ENCODE measurements at regions of chrX and their contacts with region 1.

Region 1: GRCh38 chrX:150898343-150899190 is at the start of gene CD99L2:
- DNase-seq: peak; percentile 84
- H3K4me3 Mint-ChIP-seq: peak within 1 kb of the TSS; percentile 87
- H3K27ac Mint-ChIP-seq: peak within 1 kb of the TSS; percentile 61
- H3K4me1 Mint-ChIP-seq: peaks cover 13% of the 10 kb centered on the region
- H3K27me3 Mint-ChIP-seq: peaks cover 4% of the 10 kb centered on the region
- total RNA-seq, gene CD99L2: 9.0 and 10.1 TPM in 2 replicates

Region 2: DNA sequence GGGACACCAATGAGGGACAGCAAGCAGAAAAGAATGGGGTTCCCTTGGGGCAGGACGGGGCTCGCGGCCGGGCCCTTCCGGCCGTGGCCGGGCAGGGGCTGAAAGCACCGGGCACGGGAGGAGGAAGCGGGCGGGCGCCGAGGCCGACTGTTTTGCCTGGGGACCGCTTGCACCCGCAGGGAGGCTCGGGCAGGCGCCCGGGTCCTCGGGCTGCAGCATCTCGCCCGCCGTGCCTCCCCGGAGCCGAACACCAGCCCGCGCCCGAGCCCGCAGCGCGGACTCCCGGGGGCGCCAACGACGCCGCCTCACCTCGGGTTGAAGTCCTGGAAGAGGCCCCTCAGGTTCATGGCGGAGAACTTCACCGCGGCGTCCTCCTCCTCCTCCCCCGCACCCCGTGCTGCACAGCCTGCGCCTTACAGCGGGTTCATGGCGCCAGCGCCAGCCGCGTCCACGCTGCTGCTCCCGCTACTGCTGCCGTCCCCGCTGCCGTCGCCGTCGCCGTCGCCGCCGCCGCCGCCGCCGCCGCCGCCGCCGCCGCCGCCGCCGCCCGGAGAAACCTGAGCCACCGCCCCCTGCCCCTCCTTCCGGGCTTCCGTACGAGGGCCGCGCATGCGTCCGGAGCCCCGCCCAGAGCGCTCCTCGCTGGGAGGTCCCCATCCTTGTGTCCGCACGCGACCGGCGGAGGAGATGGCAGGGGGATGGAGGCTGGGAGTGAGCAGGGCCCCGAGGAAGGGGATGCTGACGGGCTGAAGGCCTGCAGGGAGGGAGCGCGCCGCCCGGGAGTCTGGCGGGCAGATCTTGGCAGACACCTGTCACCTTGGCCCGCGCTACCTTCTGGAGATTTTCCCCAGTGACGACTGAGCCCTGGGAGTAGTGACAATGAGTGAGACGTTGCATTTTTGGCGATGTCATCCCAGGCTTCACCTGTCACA is 1267.1 kb before region 1 on chrX and contains the start of gene TMEM185A:
- intact Hi-C with region 1: loop called (anchors 5 kb)
- DNase-seq: peak; percentile 73
- H3K4me3 Mint-ChIP-seq: peak within 1 kb of the TSS; percentile 95
- H3K27ac Mint-ChIP-seq: peak within 1 kb of the TSS; percentile 85
- H3K4me1 Mint-ChIP-seq: peaks cover 43% of the 10 kb centered on the region
- H3K27me3 Mint-ChIP-seq: peaks cover 1% of the 10 kb centered on the region
- total RNA-seq, gene TMEM185A: 18.7 and 25.5 TPM in 2 replicates

Region 3: DNA sequence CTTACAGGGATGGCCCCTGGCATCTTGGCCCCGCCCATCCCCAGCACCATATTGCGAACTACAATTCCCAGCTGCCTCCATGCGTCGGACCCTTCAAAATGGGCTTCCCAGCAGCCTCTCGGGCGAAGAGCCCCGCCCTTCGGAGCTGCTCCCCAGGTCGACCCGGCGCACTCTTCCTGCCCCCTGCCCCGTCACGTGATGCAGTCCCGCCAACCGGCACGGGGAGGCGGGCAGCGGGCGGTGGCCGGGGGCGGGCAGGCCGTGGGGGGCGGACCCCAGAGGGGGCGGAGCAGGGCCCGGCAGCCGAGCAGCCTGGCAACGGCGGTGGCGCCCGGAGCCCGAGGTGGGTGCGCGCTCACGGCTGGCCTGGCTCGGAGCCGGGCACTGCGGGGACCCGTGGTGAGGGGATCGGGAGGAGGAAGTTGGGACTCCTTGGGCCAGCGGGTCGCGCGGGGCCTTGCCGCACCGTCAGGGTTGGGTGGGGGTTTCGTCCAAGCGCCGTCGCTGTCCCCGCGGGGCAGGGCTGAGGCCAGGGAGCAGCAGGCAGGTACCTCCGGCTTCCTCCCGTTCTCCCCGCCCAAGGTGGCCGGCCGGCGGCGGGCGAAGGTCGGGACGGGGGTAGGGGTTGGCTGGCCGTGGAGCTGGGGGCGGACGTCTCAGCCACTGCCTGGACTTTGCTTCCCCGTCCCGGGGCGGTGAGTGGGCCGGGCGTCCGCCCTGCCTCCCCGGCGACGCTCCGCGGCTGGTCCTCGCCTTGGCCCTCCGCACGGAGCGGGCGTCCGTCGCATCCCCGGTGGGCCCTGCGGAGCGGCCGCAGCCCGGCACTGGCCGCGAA is 330.0 kb before region 1 on chrX and contains the start of gene MTM1:
- intact Hi-C with region 1: loop called (anchors 1 kb)
- DNase-seq: peak; percentile 90
- H3K4me3 Mint-ChIP-seq: peak within 1 kb of the TSS; percentile 88
- H3K27ac Mint-ChIP-seq: peak within 1 kb of the TSS; percentile 89
- H3K4me1 Mint-ChIP-seq: peaks cover 47% of the 10 kb centered on the region
- H3K27me3 Mint-ChIP-seq: peaks cover 2% of the 10 kb centered on the region
- total RNA-seq, gene MTM1: 24.1 and 24.3 TPM in 2 replicates

Region 4: GRCh38 chrX:150683536-150684146 is 214.9 kb before region 1 on chrX:
- intact Hi-C with region 1: no loop called
- DNase-seq: no peak
- H3K4me3 Mint-ChIP-seq: no peak overlapping the region
- H3K27ac Mint-ChIP-seq: no peak overlapping the region
- H3K4me1 Mint-ChIP-seq: peaks cover 9% of the 10 kb centered on the region
- H3K27me3 Mint-ChIP-seq: no peaks in the 10 kb centered on the region

Region 5: DNA sequence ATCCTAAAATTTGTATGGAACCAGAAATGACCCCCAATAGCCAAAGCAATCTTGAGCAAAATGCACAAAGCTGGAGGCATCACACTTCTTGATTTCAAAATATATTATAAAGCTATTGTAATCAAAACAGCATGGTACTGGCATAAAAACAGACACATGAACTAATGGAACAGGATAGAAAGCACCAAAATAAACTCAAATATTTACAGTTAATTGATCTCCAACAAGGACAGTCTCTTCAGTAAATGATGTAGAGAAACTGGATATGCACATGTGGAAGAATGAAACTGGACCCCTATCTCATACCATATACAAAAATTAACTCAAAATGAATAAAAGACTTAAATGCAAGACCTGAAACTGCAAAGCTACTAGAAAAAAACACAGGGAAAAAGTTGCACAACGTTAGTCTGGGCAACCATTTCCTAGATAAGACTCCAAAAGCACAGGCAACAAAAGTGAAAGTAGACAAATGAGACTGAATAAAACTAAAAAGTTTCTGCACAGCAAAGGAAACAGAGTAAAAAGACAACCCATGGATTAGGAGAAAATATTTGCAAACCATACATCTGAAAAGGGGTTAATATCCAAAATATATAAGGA is 65.0 kb before region 1 on chrX:
- intact Hi-C with region 1: no loop called
- DNase-seq: no peak
- H3K4me3 Mint-ChIP-seq: no peak overlapping the region
- H3K27ac Mint-ChIP-seq: no peak overlapping the region
- H3K4me1 Mint-ChIP-seq: peaks cover 6% of the 10 kb centered on the region
- H3K27me3 Mint-ChIP-seq: no peaks in the 10 kb centered on the region

Region 6: DNA sequence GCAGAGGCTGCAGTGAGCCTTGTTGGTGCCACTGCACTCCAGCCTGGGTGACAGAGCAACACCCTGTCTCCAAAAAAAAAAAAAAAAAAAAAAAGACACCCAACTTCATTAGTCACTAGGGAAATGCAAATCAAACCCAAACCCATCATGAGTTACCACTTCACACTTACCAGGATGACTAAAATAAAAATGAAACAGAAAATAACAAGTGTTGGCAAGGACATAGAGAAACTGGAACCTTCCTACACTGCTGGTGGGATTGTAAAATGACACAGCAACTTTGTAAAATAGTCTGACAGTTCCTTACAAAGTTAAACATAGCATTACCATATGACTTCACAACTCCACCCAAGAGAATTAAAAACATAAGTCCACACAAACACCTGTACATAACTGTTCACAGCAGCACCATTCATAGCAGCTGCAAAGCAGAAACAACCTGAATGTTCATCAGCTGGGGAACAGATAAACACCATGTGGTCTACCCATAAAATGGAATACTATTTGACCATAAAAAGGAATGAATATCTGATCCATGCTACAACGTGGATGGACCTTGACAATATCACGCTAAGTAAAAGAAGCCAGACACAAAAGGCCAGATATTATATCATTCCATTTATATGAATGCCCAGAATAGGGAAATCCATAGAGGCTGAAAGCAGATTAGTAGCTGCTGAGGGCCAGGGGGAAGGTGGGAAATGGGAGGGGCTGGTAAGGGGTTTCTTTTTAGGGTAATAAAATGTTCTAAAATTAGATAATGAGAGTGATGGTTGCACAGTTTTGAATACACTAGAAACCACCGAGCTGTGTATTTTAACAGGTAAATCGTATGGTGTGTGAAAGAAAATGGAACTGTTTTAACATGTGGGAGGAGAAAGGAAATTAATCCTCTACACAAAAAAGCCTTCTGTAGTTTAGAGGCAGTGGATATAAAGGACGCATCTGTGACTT is 18.4 kb before region 1 on chrX:
- intact Hi-C with region 1: loop called (anchors 1 kb)
- DNase-seq: no peak
- H3K4me3 Mint-ChIP-seq: peak overlapping the region; percentile 23
- H3K27ac Mint-ChIP-seq: peak overlapping the region; percentile 81
- H3K4me1 Mint-ChIP-seq: peaks cover 25% of the 10 kb centered on the region
- H3K27me3 Mint-ChIP-seq: no peaks in the 10 kb centered on the region

Region 7: GRCh38 chrX:151082076-151082948 is 183.7 kb after region 1 on chrX:
- intact Hi-C with region 1: loop called (anchors 5 kb)
- DNase-seq: peak; percentile 15
- H3K4me3 Mint-ChIP-seq: no peak overlapping the region
- H3K27ac Mint-ChIP-seq: no peak overlapping the region
- H3K4me1 Mint-ChIP-seq: no peaks in the 10 kb centered on the region
- H3K27me3 Mint-ChIP-seq: peaks cover 15% of the 10 kb centered on the region